Esophagus squamous epithelium (tissue), 5 donors: ENCODE measurements at regions of chr1 and their contacts with region 1.

Region 1: GRCh38 chr1:154559466-154560088 is 1.1 kb upstream of the UBE2Q1 start:
- DNase-seq: no peak
- H3K4me3 ChIP-seq: peak overlapping the region; percentile 73 to 99 (median 96)
- H3K27ac ChIP-seq: peak overlapping the region; percentile 93 to 97 (median 96)
- H3K4me1 ChIP-seq: peaks cover 15 to 40% (median 32%) of the 10 kb centered on the region in 3 donors
- H3K27me3 ChIP-seq: no peaks in the 10 kb centered on the region
- CTCF ChIP-seq: peak; percentile 81 to 97 (median 94)
- POLR2A ChIP-seq: no peak

Region 2: DNA sequence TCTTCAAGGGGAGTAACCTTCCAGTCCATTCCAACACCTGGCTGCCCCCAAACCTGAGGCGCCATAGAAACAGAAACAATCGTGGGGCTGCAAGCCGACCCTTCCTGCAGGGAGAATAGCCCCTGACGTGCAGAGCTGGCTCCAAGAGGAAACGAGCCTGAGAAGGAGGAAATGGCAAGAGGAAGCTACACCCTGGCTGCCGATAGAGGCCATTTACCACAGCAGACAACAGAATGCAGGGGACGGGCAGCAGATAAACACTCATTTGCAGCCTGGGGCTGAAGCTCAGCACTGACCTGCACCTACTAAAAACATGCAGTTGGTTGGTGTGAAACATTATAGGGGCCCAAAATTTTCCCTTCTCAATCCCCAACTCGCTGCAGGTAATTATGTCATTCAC is 66.3 kb before region 1 on chr1:
- intact Hi-C with region 1: no loop called
- DNase-seq: no peak
- H3K4me3 ChIP-seq: peak overlapping the region in 1 of 4 donors; percentile 8
- H3K27ac ChIP-seq: peak overlapping the region in 3 of 4 donors; percentile 32 to 62 (median 54)
- H3K4me1 ChIP-seq: peaks cover 0 to 64% (median 5%) of the 10 kb centered on the region in 3 donors
- H3K27me3 ChIP-seq: peaks cover 0 to 12% (median 0%) of the 10 kb centered on the region in 4 donors
- CTCF ChIP-seq: no peak
- POLR2A ChIP-seq: no peak

Region 3: DNA sequence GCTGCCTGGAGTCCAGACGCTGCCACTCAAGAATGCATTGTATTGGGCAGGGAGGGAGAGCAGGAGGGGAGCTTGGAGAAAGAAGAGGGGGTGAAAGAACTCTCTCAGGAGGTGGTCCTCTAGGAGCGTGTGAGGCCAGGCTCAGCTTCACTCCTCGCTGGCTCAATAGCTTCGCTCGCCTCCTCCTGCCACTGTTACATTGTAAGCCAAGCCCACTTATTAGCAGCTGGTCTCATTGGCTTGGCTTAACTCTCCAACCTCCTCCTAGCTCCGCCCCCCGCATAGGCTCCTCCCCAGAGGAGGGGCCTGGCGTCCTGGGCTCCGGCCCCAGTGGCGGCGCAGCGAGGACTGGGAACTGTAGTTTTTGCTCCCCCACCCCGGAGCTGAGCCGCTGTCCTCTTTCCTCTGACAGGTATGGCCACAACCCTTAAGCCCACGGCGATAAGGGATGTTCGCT is 310.6 kb after region 1 on chr1 and contains the start of gene KCNN3:
- intact Hi-C with region 1: loop called (anchors 10 kb)
- DNase-seq: no peak
- H3K4me3 ChIP-seq: peak within 1 kb of the TSS; percentile 2 to 49 (median 39)
- H3K27ac ChIP-seq: peak within 1 kb of the TSS in 3 of 4 donors; percentile 26 to 60 (median 44)
- H3K4me1 ChIP-seq: peaks cover 15 to 42% (median 28%) of the 10 kb centered on the region in 3 donors
- H3K27me3 ChIP-seq: peaks cover 0 to 43% (median 3%) of the 10 kb centered on the region in 4 donors
- CTCF ChIP-seq: peak in 1 of 6 experiments; percentile 23
- POLR2A ChIP-seq: no peak
- total RNA-seq, gene KCNN3: 0.08 to 1.7 (median 0.50) TPM

Region 4: DNA sequence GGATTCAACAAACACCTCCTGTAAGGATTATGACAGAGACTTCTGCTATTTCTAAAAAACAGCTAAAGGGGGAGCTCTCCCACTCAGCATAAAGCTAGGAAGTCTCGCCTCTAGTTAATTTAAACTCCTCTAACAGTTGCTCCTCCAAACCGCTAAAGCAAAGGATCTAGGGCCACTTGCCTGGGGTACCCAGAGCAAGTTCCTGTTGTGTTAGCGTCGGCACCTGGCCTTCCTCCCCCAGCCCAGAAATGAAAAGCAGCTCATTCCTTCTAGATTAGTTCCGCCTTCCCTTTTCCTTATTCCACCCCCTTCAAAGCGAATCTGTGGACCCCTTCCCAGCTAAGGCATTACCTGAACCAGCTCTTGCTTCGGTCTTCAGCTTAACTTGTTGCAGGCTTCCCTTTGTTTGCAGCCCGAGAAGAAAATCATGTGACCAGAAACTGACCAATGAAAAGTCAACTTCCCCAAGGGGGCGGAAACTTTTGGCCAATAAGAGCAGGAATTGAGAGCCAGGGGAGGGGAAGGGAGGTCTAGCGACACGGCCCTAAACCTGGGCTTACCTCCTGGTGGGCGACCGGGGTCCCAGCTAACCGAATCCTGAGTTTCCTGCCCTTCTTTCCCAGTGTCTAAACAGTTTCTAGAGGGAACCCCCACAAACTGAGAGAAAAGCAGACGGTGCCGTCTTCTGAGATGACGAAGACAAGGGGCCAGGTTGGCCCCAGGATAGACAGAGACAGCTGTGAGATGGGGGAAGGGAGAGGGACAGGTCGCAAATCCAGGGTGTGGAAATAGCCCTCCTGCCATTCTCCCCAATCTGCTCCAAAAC is 396.4 kb after region 1 on chr1 and contains the start of gene PBXIP1:
- intact Hi-C with region 1: loop called (anchors 10 kb)
- DNase-seq: peak; percentile 30
- H3K4me3 ChIP-seq: peak within 1 kb of the TSS; percentile 43 to 71 (median 55)
- H3K27ac ChIP-seq: peak within 1 kb of the TSS; percentile 79 to 89 (median 85)
- H3K4me1 ChIP-seq: peaks cover 28 to 94% (median 64%) of the 10 kb centered on the region in 3 donors
- H3K27me3 ChIP-seq: no peaks in the 10 kb centered on the region
- CTCF ChIP-seq: peak in 2 of 6 experiments; percentile 2 to 12
- POLR2A ChIP-seq: peak in 1 of 4 donors; percentile 64
- total RNA-seq, gene PBXIP1: 11.1 to 51.1 (median 29.3) TPM